Activated B cell treated with CpG ODN at 0.5 μM for 24 hours (primary cell): ENCODE measurements at regions of chr14 and their contacts with region 1.

Region 1: DNA sequence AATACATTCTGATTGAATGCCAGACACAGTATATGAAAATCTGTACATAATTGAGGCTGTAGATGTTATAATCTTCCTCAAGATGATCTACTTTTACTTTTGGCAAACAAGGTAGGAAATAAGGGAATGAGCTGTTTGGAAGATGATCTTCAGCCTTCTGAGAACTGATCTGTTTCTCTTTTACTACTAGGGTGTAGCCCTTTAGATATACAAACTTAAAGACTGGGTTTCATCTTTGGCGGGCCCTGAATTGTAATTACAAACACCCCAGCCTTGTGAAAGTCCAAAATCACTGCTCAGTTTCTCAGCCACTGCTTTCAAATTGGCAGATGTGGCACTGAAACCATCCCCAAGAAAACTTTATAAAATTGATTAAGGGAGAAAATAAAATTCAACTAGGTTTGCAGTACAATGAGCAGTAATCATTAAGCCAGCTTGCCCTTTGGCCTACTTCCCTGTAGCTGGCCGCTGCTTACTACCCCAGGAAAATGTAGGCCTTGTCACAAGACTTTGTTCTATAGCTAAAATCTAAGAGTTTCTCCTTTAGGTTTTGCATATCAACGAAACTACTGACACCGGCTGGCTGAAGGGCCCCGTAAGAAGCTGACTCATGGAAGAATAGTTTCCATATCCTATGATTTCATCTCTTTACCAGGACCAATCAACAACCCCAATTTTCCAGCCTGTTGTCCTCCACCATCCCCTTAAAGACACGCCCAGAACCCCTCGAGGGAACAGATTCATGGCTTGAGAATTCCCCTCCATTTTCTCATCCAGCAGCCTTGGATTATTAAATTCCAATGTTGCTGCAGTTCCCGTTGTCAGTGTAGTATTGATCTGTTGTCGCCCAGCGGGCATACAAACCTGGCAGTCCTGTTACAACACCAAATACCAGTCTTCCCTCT is 210.8 kb downstream of the PCNX1 start:
- DNase-seq: no peak
- ATAC-seq: peak; percentile 59
- H3K4me3 Mint-ChIP-seq: peak overlapping the region; percentile 41
- H3K27ac Mint-ChIP-seq: peak overlapping the region; percentile 93
- H3K4me1 Mint-ChIP-seq: peaks cover 40% of the 10 kb centered on the region
- H3K27me3 Mint-ChIP-seq: no peaks in the 10 kb centered on the region
- CTCF ChIP-seq: no peak

Region 2: GRCh38 chr14:71130491-71131179 is 12.5 kb after region 1 on chr14:
- CTCF ChIA-PET with region 1: no interaction called
- POLR2A ChIA-PET with region 1: interaction called, 3 read pairs
- intact Hi-C with region 1: loop called (anchors 1 kb)
- DNase-seq: no peak
- ATAC-seq: no peak
- H3K4me3 Mint-ChIP-seq: no peak overlapping the region
- H3K27ac Mint-ChIP-seq: no peak overlapping the region
- H3K4me1 Mint-ChIP-seq: peaks cover 11% of the 10 kb centered on the region
- H3K27me3 Mint-ChIP-seq: no peaks in the 10 kb centered on the region
- CTCF ChIP-seq: no peak

Region 3: GRCh38 chr14:71235875-71236274 is 117.8 kb after region 1 on chr14:
- CTCF ChIA-PET with region 1: no interaction called
- POLR2A ChIA-PET with region 1: no interaction called
- intact Hi-C with region 1: no loop called
- DNase-seq: no peak
- ATAC-seq: no peak
- H3K4me3 Mint-ChIP-seq: no peak overlapping the region
- H3K27ac Mint-ChIP-seq: no peak overlapping the region
- H3K4me1 Mint-ChIP-seq: peaks cover 9% of the 10 kb centered on the region
- H3K27me3 Mint-ChIP-seq: no peaks in the 10 kb centered on the region
- CTCF ChIP-seq: no peak

Region 4: GRCh38 chr14:71665157-71665556 is 547.1 kb after region 1 on chr14:
- CTCF ChIA-PET with region 1: no interaction called
- POLR2A ChIA-PET with region 1: no interaction called
- intact Hi-C with region 1: no loop called
- DNase-seq: no peak
- ATAC-seq: no peak
- H3K4me3 Mint-ChIP-seq: no peak overlapping the region
- H3K27ac Mint-ChIP-seq: no peak overlapping the region
- H3K4me1 Mint-ChIP-seq: no peaks in the 10 kb centered on the region
- H3K27me3 Mint-ChIP-seq: no peaks in the 10 kb centered on the region
- CTCF ChIP-seq: no peak